Breast epithelium (tissue), 4 donors: ENCODE measurements at regions of chr12 and their contacts with region 1.

Region 1: DNA sequence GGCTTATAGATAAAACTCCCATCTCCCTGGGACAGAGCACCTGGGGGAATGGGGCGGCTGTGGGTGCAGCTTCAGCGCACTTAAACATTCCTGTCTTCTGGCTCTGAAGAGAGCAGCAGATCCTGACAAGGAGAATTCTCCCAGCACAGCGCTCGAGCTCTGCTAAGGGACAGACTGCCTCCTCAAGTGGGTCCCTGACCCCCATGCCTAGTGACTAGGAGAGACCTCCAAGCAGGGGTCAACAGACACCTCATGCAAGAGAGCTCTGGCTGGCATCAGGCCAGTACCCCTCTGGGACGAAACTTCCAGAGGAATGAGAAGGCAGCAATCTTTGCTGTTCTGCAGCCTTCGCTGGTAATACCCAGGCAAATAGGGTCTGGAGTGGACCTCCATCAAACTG is 28.1 kb upstream of the CD163L1 start:
- DNase-seq: no peak
- H3K4me3 ChIP-seq: no peak overlapping the region
- H3K27ac ChIP-seq: no peak overlapping the region
- H3K4me1 ChIP-seq: no peaks in the 10 kb centered on the region
- H3K27me3 ChIP-seq: no peaks in the 10 kb centered on the region
- CTCF ChIP-seq: no peak
- POLR2A ChIP-seq: no peak

Region 2: DNA sequence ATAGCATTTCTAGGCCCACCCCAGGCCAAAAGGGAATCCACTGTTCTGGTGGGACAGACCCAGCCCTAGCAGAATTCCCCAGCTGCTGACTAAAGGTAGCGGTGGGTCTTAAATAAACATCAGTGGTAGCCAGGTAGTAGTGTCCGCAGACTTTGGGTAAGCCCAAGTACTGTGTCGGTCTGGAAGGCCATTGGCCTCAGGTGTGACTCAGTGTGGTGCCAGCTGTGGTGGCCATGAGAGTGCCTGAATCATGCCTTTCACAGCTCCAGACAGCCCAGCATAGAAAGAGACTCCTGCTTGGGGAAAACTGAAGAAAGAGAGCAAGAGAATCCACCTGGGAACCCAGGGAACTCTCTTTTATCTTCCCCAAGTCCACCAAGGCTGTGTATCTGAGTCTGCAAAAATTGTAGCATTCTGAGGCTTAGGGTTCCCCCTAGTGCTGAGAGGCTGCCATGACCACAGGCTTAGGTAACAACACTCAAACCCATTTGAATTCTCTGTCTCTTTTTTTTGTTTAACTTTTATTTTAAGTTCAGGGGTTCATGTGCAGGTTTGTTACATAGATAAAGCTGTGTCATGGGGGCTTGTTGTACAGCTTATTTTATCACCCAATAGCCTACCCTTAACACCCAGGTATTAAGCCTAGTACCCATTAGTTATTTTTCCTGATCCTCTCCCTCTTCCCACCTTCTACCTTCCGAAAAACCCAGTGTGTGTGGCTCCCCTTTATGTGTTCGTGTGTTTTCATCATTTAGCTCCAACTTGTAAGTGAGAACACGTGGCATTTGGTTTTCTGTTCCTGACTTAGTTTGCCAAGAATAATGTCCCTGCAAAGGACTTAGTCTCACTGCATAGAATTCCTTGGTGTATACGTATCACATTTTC is 11.4 kb before region 1 on chr12:
- intact Hi-C with region 1: no loop called
- DNase-seq: no peak
- H3K4me3 ChIP-seq: no peak overlapping the region
- H3K27ac ChIP-seq: no peak overlapping the region
- H3K4me1 ChIP-seq: no peaks in the 10 kb centered on the region
- H3K27me3 ChIP-seq: no peaks in the 10 kb centered on the region
- CTCF ChIP-seq: peak; percentile 41 to 59 (median 57)
- POLR2A ChIP-seq: no peak

Region 3: DNA sequence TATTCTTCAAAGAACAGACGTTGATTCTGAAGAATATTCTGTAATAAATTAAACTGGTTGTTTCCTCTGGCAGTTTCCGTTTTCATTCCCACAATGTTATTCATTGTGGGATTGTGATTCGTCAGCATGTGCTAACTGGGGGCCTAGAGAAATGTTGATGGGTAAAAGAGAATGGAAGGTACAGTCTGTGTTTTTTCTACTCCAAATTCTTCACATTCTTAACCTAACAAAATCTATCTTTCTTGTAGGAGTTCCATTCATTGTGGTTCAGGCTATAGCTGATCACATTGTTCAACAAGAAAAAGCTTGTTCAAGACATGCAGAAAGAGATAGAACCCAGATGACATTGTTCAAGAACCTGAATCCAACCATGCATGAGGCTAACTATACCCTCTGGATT is 25.6 kb after region 1 on chr12:
- intact Hi-C with region 1: loop called (anchors 2 kb)
- DNase-seq: no peak
- H3K4me3 ChIP-seq: peak overlapping the region in 1 of 3 donors; percentile 33
- H3K27ac ChIP-seq: no peak overlapping the region
- H3K4me1 ChIP-seq: no peaks in the 10 kb centered on the region
- H3K27me3 ChIP-seq: no peaks in the 10 kb centered on the region
- CTCF ChIP-seq: no peak
- POLR2A ChIP-seq: no peak